ENCODE measurements at regions of chr12 and their contacts with region 1.

Region 1: GRCh38 chr12:89019408-89020120 is 332.7 kb downstream of the DUSP6 start:
- DNase-seq: peak; percentile 82
- ATAC-seq: peak; percentile 88
- H3K4me3 Mint-ChIP-seq: no peak overlapping the region
- H3K27ac Mint-ChIP-seq: no peak overlapping the region
- H3K4me1 Mint-ChIP-seq: peaks cover 16% of the 10 kb centered on the region
- H3K27me3 Mint-ChIP-seq: peaks cover 4% of the 10 kb centered on the region

Region 2: DNA sequence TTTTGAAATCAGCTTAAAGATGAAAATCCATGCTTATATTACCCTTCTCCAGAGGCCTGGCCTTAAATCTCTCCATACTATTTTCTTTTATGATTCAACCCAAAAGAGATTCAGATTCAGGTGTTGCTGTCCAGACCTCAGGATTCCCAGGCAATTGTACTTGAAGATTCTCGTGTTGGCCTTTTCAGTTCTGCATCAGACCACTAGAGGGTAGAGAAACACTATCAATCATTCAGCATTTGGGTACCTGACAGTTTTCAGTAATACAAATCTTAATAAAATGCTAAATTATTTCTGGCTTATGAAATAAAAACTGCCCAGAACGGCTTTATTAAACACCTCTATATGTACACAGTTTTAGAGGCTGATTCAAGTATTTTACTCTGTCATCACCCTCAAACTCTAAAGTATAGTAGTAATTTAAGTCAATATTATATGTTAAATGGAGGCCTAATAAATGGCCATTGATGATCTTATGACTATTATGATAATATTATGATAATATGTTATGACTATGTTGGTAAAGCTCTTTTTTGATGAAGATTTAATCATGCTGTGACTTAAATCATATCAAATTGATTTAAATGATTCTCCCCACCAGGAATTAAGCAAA is 31.6 kb after region 1 on chr12:
- CTCF ChIA-PET with region 1: interaction called, 5 read pairs
- POLR2A ChIA-PET with region 1: interaction called, 3 read pairs
- intact Hi-C with region 1: loop called (anchors 2 kb)
- DNase-seq: peak; percentile 22
- ATAC-seq: peak; percentile 74
- H3K4me3 Mint-ChIP-seq: no peak overlapping the region
- H3K27ac Mint-ChIP-seq: peak overlapping the region; percentile 62
- H3K4me1 Mint-ChIP-seq: peaks cover 19% of the 10 kb centered on the region
- H3K27me3 Mint-ChIP-seq: no peaks in the 10 kb centered on the region

Region 3: DNA sequence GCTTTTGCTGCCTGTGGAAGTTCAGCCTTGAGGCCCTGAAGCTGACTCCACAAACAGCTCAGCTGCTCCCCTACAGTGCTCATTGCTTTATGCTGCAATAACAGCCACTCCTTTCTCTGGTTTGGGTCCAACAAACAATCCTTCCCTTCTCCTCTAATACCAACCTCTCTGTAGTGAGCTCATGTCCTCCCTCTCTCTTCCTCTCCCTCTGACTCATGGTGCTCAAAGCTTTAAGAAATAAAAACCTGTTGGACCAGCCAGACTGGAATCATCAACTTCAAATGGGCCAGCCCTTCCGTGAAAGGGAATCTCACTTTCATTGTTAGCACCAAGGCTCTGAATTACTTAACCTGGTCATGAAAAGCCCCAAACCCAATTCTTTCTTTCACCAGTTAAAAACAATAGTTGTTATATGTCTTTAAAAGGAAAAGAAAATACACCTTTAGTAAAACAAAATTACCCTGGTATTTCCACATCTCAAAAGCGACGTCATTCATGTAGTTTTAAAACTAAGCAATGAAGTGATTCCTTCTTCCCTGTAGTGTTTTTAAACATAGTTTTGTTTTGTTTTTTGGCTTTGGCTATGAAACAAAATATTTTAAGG is 206.3 kb after region 1 on chr12:
- CTCF ChIA-PET with region 1: no interaction called
- POLR2A ChIA-PET with region 1: interaction called, 9 read pairs
- intact Hi-C with region 1: loop called in 1 of 2 experiments (anchors 1 kb)
- DNase-seq: peak; percentile 71
- ATAC-seq: peak; percentile 80
- H3K4me3 Mint-ChIP-seq: peak overlapping the region; percentile 58
- H3K27ac Mint-ChIP-seq: peak overlapping the region; percentile 99
- H3K4me1 Mint-ChIP-seq: peaks cover 68% of the 10 kb centered on the region
- H3K27me3 Mint-ChIP-seq: no peaks in the 10 kb centered on the region

Region 4: GRCh38 chr12:89470741-89471509 is 451.4 kb after region 1 on chr12:
- CTCF ChIA-PET with region 1: interaction called, 40 read pairs
- POLR2A ChIA-PET with region 1: no interaction called
- intact Hi-C with region 1: no loop called
- DNase-seq: peak; percentile 14
- ATAC-seq: peak; percentile 57
- H3K4me3 Mint-ChIP-seq: no peak overlapping the region
- H3K27ac Mint-ChIP-seq: peak overlapping the region; percentile 69
- H3K4me1 Mint-ChIP-seq: peaks cover 57% of the 10 kb centered on the region
- H3K27me3 Mint-ChIP-seq: no peaks in the 10 kb centered on the region

Region 5: GRCh38 chr12:89529738-89530137 is 510.2 kb after region 1 on chr12:
- CTCF ChIA-PET with region 1: interaction called, 22 read pairs
- POLR2A ChIA-PET with region 1: interaction called, 3 read pairs
- intact Hi-C with region 1: loop called (anchors 1 kb)
- DNase-seq: no peak
- ATAC-seq: no peak
- H3K4me3 Mint-ChIP-seq: no peak overlapping the region
- H3K27ac Mint-ChIP-seq: no peak overlapping the region
- H3K4me1 Mint-ChIP-seq: peaks cover 19% of the 10 kb centered on the region
- H3K27me3 Mint-ChIP-seq: no peaks in the 10 kb centered on the region

Region 6: DNA sequence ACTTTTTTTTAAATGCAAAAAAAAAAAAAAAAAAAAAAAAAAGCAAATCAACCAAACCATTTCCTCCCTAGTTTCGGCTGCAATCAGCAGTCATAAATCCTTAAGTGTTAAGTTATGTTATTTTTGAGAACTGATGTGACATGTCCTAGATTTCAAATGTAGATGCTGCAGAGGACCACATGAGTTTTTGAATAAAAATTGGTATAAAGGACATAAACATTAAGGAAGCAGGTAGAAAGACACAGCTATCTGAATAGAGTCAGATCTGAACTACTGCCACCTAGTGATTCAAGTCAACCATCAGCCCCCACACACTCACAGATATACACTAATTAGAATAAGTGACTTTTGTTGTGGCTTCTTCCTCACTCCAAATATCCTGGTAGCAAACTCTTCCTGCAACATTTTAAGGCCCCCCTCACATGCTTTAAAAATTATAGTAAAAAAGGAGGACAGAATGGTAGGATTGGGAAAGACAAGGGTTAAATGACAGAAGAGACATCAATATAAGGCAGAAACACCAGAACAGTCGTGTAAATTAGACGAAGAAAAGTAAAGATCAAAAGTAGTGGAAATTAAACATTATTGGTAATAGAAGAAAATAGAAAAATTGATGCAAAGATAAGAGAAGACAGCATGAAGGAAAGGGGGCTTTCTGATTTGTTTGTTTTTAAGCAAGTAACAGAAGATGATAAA is 1083.5 kb after region 1 on chr12:
- CTCF ChIA-PET with region 1: no interaction called
- POLR2A ChIA-PET with region 1: no interaction called
- intact Hi-C with region 1: loop called in 1 of 2 experiments (anchors 10 kb)
- DNase-seq: peak; percentile 19
- ATAC-seq: peak; percentile 73
- H3K4me3 Mint-ChIP-seq: no peak overlapping the region
- H3K27ac Mint-ChIP-seq: no peak overlapping the region
- H3K4me1 Mint-ChIP-seq: peaks cover 15% of the 10 kb centered on the region
- H3K27me3 Mint-ChIP-seq: peaks cover 2% of the 10 kb centered on the region